Dorsolateral prefrontal cortex (tissue), 120 donors: ENCODE measurements at regions of chr4 and their contacts with region 1.

Region 1: GRCh38 chr4:102620697-102621497 is 119.7 kb downstream of the NFKB1 start:
- DNase-seq: peak in 3 of 10 donors; percentile 34 to 60 (median 50)
- H3K4me3 ChIP-seq: peak overlapping the region in 30 of 59 donors; percentile 1 to 48 (median 22)
- H3K27ac ChIP-seq: peak overlapping the region in 52 of 59 donors; percentile 3 to 85 (median 66)
- H3K27me3 ChIP-seq: no peaks in the 10 kb centered on the region
- CTCF ChIP-seq: peak in 55 of 56 donors; percentile 52 to 86 (median 74)

Region 2: GRCh38 chr4:102439236-102439614 is 181.7 kb before region 1 on chr4:
- intact Hi-C with region 1: loop called in 1 of 2 experiments (anchors 5 kb)
- DNase-seq: no peak
- H3K4me3 ChIP-seq: peak overlapping the region in 3 of 59 donors; percentile 5 to 11 (median 7)
- H3K27ac ChIP-seq: peak overlapping the region in 34 of 59 donors; percentile 2 to 78 (median 44)
- H3K27me3 ChIP-seq: no peaks in the 10 kb centered on the region
- CTCF ChIP-seq: no peak

Region 3: DNA sequence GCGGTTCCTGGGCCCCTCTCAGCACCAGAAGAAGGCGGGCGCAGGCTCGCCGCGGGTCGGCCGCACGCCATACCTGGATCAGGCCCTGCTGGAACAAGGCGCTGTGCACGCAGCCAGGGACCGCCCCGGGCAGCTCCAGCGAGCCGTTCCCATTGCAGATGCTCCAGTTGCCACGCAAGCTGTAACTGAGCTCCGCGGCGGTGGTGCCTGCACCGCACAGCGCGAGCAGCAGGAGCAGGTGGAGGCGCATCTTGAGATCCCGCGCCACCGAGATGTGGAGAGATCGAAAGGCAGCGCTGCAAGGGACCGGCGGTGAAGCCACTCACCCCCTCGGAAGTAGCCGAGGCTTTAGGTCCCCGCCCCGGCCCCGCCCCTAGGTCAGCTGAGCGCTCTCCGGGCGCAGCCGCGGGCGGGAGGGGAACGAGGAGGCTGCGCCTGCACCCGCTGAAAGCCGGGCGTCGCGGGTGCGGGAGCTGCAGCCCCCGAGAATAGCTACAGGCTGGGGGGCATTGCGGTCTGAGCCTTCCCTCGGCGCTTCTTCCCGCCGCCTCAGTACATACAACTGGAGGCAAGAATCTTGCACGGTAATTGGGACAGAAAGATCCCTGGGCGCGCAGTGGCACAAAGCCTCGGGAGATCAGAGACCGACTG is 139.9 kb after region 1 on chr4 and contains the start of gene MANBA:
- intact Hi-C with region 1: loop called in 1 of 2 experiments (anchors 5 kb)
- DNase-seq: peak; percentile 65 to 89 (median 82)
- H3K4me3 ChIP-seq: peak within 1 kb of the TSS; percentile 63 to 100 (median 95)
- H3K27ac ChIP-seq: peak within 1 kb of the TSS in 58 of 59 donors; percentile 52 to 93 (median 82)
- H3K27me3 ChIP-seq: no peaks in the 10 kb centered on the region
- CTCF ChIP-seq: peak in 27 of 56 donors; percentile 4 to 48 (median 19)
- total RNA-seq, gene MANBA: 18.6 to 39.4 (median 27.7) TPM

Region 4: DNA sequence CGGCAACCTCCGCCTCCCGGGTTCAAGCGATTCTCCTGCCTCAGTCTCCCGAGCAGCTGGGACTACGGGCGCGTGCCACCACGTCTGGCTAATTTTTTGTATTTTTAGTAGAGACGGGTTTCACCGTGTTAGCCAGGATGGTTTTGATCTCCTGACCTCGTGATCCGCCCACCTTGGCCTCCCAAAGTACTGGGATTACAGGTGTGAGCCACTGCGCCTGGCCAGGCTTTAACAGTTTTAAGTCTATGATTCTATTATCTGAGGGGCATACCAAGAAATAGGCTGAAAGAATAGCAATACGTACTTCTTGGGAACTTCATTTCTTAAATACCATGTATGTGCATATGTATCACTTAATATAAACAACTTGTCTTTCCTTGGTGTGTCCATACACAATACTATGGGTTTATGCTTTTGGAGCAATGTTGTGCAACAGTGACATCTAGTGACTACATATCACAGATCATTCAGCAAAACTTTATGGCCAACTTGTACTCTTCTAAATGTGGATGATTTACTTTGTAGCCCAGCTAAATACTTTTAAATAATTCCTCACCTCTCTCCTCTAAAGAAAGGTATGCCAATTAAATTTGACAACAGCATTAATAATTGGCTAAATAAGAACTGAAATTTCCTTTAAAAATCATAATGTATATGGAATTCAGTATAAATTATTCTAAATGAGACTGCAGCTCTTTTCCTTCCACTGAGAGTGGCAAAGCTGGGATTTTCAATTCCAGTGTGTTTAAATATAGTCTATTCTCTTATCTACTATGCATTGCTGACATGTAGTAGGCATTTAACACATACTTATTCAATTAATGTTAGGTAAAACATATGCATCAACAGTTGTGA is 388.2 kb after region 1 on chr4:
- intact Hi-C with region 1: loop called (anchors 2 to 5 kb)
- DNase-seq: no peak
- H3K4me3 ChIP-seq: no peak overlapping the region
- H3K27ac ChIP-seq: peak overlapping the region in 1 of 59 donors; percentile 31
- H3K27me3 ChIP-seq: no peaks in the 10 kb centered on the region
- CTCF ChIP-seq: peak; percentile 49 to 93 (median 80)

Region 5: DNA sequence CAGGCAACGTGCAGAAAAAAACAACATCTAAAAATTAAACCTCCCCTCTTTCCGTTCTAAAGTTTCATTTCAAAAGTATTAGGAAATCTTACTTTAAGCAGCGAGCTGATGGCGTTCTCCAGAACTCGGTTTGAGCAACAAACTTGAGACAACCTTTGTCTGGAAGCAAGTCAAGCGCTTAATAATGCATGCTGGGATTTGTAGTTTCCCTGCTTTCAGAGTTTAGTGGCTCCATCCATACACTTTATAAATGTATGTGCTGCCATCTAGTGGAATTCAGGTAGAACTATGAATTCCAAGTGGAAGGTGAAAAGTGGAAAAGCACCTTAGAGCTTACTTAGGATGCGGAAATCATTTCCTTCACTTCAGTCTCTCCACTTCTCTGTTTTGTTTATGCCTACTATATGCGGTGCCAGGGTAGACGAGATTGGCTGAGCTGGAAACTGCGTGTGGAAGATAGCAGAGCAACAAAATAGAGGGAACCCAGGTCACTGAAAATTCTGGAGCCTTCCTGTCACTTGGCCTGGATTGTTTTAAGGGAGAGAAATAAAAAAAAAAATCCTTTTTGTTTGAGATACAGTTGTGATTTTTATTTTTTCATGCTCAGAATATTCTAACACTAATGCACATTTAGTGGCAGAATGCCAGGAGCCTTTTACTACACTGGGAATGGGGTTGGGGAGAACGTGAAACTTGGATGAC is 478.9 kb after region 1 on chr4 and contains the start of gene BDH2:
- intact Hi-C with region 1: loop called (anchors 5 kb)
- DNase-seq: peak in 3 of 10 donors; percentile 28 to 46 (median 30)
- H3K4me3 ChIP-seq: peak within 1 kb of the TSS; percentile 31 to 77 (median 58)
- H3K27ac ChIP-seq: peak within 1 kb of the TSS in 58 of 59 donors; percentile 13 to 89 (median 75)
- H3K27me3 ChIP-seq: no peaks in the 10 kb centered on the region
- CTCF ChIP-seq: peak; percentile 79 to 99 (median 92)
- total RNA-seq, gene BDH2: 22.2 to 79.3 (median 39.1) TPM